Activated CD8-positive, alpha-beta T cell treated with anti-CD3 and anti-CD28 coated beads, Interleukin-2, amount 10 ng/mL, durations not matched to agents 7 days and 5 days (primary cell): ENCODE measurements at regions of chr12 and their contacts with region 1.

Region 1: DNA sequence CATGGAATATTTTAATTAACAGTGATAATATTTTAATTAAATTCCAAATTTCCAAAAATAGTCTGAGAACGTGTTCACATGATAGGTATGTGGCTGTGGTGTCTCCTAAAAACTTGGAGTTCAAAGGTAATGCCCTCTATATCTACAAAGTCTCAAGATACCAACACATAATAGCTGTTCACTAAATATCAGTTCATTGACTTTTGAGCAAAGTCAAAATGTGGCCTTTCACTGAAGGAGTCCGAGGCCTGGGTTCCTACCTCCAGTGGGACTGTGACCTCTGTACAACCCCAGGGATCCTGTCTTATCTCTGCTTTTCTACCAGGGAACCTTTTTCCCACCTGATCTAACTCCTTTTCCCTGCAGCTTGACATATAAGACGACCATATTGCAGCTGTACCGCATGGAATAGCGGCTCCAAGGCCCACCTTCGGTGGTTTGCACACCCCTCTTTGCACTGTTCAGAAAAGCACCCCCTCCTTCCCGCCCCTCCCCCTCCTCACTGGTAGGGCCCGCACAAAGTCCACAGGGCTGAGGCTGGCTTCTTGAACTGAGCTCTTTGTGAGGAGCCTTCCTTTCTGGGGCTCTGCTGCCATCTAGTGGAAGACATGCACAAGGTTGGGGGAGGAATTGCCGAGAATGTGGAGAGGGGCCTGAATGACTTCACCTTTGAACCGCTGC is 3.1 kb downstream of the CCND2 start:
- DNase-seq: peak; percentile 93
- ATAC-seq: peak; percentile 13
- H3K4me3 Mint-ChIP-seq: peak overlapping the region; percentile 99
- H3K27ac Mint-ChIP-seq: peak overlapping the region; percentile 84
- H3K4me1 Mint-ChIP-seq: peaks cover 59% of the 10 kb centered on the region
- H3K27me3 Mint-ChIP-seq: no peaks in the 10 kb centered on the region

Region 2: DNA sequence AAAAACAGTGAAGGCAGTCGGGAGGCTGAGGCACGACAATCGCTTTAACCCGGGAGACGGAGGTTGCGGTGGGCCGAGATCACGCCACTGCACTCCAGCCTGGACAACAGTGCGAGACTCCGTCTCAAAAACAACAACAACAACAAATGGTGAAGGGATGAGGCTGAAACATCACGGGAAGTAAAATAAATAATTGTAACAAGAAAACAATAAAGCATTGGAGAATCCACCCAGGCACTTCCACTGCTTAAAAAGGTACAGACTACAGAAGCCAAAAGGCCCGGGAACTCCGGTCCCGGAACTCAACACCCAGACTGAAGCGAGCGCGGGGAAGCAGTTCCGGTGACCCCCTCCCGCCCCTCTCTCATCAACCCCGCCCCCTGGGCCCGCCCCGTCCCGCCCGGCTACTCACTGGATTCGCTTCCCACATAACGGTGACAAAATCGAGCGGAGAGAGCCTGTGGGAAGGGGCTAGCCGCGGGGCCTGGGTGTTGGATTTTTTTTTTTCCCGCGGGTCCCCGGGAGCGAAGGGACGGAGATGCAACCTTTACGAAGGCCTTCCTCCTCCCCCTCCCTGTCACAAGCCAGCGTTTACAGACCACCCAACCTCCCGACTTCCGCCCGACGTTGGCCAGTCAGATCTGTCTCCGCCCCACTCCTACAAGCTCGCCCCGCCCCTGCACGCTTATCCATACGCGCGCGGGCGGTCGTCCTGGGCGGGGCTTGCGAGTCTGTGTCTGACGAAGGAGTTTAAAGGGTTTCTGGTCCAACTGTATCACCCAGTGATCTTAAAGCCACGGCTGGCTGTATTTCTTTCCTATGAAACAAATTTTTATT is 403.6 kb before region 1 on chr12 and contains the start of gene PARP11:
- CTCF ChIA-PET with region 1: interaction called, 11 read pairs
- POLR2A ChIA-PET with region 1: interaction called, 5 read pairs
- DNase-seq: peak; percentile 99
- ATAC-seq: peak; percentile 94
- H3K4me3 Mint-ChIP-seq: peak within 1 kb of the TSS; percentile 94
- H3K27ac Mint-ChIP-seq: peak within 1 kb of the TSS; percentile 97
- H3K4me1 Mint-ChIP-seq: peaks cover 41% of the 10 kb centered on the region
- H3K27me3 Mint-ChIP-seq: no peaks in the 10 kb centered on the region
- total RNA-seq, gene PARP11: 36.4 to 36.6 TPM

Region 3: GRCh38 chr12:3988519-3989448 is 287.9 kb before region 1 on chr12:
- CTCF ChIA-PET with region 1: interaction called, 163 read pairs
- POLR2A ChIA-PET with region 1: interaction called, 6 read pairs
- DNase-seq: peak; percentile 48
- ATAC-seq: peak; percentile 82
- H3K4me3 Mint-ChIP-seq: peak overlapping the region; percentile 29
- H3K27ac Mint-ChIP-seq: peak overlapping the region; percentile 86
- H3K4me1 Mint-ChIP-seq: peaks cover 25% of the 10 kb centered on the region
- H3K27me3 Mint-ChIP-seq: peaks cover 7% of the 10 kb centered on the region

Region 4: DNA sequence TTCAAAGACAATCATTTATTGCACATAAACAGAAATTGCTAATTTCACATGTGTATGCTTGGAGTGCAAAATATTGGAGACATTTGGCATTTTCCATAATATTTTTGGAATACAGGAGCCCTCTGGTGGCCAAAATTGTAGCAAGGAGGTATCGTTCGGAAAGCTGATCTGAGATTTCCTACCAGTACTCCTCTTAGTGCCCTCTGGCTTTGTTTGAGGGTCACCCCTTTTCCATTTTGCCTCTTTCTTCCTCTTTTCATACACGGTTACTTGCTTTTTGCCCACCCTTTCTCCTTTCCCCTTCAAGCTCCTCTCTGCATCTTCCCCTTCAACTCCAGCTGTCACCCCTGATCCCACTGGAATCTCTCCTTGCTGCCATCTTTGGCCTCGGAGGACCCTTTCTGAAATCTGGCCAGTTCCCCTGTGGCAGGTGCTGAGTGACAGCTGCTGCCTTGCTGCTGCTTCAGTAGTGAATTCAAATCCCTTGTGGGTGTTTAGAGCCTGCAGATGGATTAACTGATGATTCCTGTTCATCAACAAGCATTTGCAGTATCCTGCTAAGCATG is 238.8 kb before region 1 on chr12:
- CTCF ChIA-PET with region 1: interaction called, 37 read pairs
- POLR2A ChIA-PET with region 1: no interaction called
- DNase-seq: no peak
- ATAC-seq: no peak
- H3K4me3 Mint-ChIP-seq: no peak overlapping the region
- H3K27ac Mint-ChIP-seq: no peak overlapping the region
- H3K4me1 Mint-ChIP-seq: peaks cover 9% of the 10 kb centered on the region
- H3K27me3 Mint-ChIP-seq: peaks cover 21% of the 10 kb centered on the region

Region 5: GRCh38 chr12:4135919-4136605 is 140.6 kb before region 1 on chr12:
- CTCF ChIA-PET with region 1: interaction called, 95 read pairs
- POLR2A ChIA-PET with region 1: interaction called, 260 read pairs
- DNase-seq: no peak
- ATAC-seq: peak; percentile 45
- H3K4me3 Mint-ChIP-seq: no peak overlapping the region
- H3K27ac Mint-ChIP-seq: peak overlapping the region; percentile 72
- H3K4me1 Mint-ChIP-seq: peaks cover 57% of the 10 kb centered on the region
- H3K27me3 Mint-ChIP-seq: no peaks in the 10 kb centered on the region

Region 6: DNA sequence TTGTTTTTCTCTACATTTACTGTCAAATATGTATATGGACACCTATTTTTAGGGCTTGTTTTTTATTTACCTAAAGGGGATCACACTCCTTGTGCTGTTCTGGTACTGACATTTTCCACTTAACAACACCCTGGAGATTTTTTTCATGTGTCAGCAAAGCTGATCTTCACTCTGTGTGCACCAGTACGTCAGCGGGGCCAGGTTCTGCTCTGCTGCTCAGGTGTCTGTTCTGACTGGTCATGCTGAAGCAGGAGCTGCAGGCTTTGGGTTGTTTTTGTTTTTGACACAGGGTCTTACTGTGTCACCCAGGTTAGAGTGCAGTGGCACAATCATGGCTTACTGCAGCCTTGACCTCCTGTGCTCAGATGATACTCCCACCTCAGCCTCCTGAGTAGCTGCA is 85.0 kb before region 1 on chr12:
- CTCF ChIA-PET with region 1: no interaction called
- POLR2A ChIA-PET with region 1: no interaction called
- DNase-seq: no peak
- ATAC-seq: no peak
- H3K4me3 Mint-ChIP-seq: no peak overlapping the region
- H3K27ac Mint-ChIP-seq: no peak overlapping the region
- H3K4me1 Mint-ChIP-seq: peaks cover 12% of the 10 kb centered on the region
- H3K27me3 Mint-ChIP-seq: no peaks in the 10 kb centered on the region

Region 7: DNA sequence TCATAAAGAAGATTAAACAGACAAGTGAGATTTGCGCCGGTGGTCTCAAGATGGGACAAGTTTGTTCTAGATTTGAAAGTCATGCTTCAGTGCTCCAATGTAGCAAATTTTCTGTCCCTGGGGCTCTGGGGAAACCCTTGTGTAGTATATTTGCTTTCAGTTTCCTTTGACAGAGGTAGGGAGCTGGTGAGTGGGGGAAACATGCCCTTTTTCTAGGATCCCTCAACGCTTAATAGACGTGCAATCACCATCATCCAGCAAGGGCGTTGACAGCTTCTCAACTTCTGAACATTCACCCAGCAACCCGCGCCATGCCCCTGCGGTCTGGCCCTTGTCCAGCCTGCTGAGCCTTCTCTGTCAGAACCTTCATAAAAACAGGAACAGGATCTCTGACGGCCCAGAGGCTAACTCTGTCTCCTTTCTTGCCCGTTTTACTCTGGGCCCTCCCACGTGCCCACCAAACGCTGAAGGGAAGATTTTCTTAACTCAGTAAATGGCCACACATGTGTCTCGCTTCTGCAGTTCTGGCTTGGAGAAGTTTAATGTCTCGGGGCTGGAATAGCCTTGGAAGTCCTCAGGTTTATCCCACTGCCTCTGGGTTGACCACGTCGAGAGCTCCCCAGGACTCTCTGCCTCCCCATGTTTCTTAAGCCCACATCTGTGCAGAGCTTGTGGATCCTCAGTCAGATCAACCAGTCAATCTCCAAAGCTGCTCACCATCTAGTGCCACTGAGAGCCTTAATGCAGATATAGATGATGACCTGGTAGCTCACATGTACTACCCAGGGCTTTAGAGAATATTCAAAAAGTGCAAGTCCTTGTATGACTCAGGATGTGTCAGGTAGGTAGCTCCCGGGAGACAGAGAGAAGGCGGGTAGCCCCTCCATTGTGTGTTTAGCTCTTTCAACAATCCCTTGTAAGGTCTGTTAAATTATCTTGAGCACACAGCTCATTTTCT is 61.2 kb before region 1 on chr12:
- CTCF ChIA-PET with region 1: interaction called, 16 read pairs
- POLR2A ChIA-PET with region 1: interaction called, 37 read pairs
- DNase-seq: peak; percentile 44
- ATAC-seq: peak; percentile 85
- H3K4me3 Mint-ChIP-seq: peak overlapping the region; percentile 51
- H3K27ac Mint-ChIP-seq: peak overlapping the region; percentile 90
- H3K4me1 Mint-ChIP-seq: peaks cover 42% of the 10 kb centered on the region
- H3K27me3 Mint-ChIP-seq: no peaks in the 10 kb centered on the region